ENCODE measurements at regions of chr17 and their contacts with region 1.

Region 1: GRCh38 chr17:79045842-79046196 is 21.9 kb downstream of the C1QTNF1 start:
- DNase-seq: peak; percentile 86

Region 2: GRCh38 chr17:78986048-78986648 is 59.7 kb before region 1 on chr17:
- intact Hi-C with region 1: loop called (anchors 5 kb)
- DNase-seq: no peak

Region 3: DNA sequence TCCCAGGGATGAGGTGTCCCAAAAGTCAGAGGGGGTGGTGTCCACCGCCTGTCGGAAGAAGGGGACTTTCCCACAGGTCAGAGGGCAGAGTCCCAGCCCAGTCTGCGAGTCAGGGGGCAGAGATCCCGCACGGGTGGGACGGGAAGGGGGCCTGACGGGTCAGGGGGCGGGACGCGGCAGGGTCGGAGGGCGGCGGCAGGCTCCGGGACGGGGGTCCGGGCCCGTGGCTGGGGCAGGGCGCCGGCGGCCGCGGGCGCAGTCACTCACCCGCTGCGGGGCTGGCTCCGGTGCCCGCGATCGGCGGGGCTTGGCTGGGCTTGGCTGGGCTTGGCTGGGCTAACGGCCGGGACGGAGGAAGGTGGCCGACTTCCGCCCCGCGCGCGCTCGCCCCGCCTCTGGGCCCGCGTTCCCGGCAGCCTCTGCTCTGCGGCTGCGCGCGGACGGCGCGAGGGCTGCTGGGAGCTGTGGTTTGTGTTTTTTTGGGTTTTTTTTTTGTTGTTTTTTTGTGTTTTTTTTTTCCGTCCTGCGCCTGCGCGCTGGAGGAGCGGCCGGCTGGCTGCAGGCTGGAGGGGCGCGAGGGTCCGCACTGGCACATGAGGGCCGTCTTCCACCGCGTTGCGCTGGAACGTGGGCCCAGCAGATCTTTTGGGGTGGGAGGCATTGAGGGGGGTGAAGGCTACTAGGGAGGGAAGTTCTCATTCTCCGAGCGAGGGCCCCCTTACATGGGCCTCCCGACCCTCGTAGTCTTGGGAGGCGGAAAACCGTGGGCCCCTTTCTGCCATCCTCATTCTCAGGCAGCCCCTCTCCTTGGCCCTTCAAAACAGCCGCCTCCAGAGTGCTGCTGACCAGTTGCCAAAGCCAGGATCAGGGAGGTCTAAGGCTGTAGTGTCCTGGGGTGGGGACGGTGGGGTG is 36.2 kb before region 1 on chr17 and contains the start of gene CANT1:
- intact Hi-C with region 1: loop called (anchors 5 kb)
- DNase-seq: peak; percentile 92
- total RNA-seq, gene CANT1: 25.2 TPM

Region 4: GRCh38 chr17:79019632-79020584 is 25.9 kb before region 1 on chr17:
- intact Hi-C with region 1: loop called (anchors 2 kb)
- DNase-seq: peak; percentile 76

Region 5: DNA sequence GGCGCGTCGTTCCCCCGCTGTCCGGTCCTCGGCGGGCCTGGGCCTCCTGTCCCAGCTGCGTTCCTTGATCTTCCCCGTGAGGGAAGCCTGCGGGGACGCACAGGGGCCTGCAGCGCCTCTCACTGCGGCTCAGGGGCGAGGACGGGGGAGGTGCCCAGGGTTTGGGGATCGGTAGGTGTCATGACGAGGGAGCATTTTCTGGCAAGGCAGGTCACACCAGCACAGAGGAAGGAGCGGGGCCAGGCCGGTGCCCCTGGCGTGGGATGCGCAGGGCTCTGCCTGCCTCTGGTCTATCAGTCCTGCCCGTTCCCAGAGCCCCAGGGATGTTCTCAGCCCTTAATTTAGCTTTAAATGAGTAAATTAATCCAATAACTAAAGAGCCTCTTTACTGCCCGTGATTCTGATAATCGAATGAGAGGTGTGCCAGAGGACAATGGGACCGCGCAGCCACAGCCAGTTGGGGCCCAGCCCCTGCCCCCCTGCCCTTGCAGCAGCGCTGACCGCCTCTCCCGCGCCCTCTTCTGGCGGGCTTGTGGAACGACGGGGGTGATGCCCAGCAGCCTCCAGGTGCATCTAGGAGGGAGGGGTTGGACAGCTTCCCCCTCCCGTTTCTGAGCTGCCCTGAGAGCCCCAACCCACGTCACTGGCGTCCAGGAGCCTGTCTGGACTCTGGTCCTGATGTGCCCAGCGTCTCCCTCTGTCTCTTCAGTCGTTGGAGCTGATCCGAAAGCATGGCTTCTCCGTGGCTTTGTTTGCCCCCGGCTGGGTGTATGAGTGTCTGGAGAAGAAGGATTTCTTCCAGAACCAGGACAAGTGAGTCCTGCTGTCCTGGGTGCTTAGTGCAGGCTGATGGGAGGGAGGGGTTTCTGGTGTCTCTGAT is 36.7 kb after region 1 on chr17:
- intact Hi-C with region 1: loop called (anchors 2 kb)
- DNase-seq: no peak

Region 6: GRCh38 chr17:79393358-79394202 is 347.8 kb after region 1 on chr17:
- intact Hi-C with region 1: loop called (anchors 5 kb)
- DNase-seq: peak; percentile 85

Measured in cardiac septum (tissue), 1 donor.